ENCODE measurements at regions of chr12 and their contacts with region 1.

Region 1: GRCh38 chr12:66061557-66062289 is 68.8 kb downstream of the LLPH start:
- DNase-seq: no peak
- H3K4me3 ChIP-seq: no peak overlapping the region
- H3K27ac ChIP-seq: no peak overlapping the region
- H3K4me1 ChIP-seq: no peaks in the 10 kb centered on the region
- H3K27me3 ChIP-seq: no peaks in the 10 kb centered on the region
- CTCF ChIP-seq: no peak

Region 2: DNA sequence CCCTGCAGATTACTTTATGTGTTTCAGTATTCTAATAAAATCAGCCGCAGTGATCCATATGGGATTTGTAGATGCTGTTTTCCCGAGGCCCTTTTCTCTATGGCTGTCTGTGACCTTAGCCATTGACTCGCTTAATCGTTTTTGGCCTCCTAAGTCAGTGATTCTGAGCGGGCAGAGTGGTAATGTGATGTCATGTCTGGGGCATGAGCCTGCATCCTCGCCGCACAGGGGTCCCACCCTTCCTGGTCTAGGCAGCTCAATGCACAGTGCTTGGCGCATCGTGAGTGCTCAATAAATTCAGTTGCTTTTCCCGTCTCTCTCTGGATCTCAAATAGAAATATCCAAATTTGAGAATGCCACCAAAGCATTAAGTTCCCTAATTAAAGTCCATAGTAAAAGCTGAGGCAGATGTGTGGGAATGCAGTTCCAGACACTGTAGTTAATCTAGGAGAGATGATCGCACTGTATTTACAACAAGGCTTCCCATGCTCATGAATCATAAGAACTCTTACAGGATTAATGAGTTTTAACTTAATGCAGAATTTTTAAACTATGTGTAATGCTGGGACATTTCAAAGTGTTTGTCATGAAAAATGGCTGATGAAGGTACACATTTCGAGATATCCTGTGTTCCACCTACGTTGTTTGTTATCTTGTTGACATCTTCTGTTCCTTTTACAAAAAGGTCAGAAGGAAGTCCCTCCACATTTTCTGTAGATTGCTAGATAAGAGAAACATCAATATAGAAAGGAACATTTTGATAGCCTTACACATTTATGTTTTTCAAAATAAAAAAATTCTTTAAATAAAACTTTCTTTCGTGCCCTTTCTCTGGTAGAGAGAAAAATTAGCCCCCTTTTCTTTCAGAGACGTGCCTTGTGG is 208.0 kb before region 1 on chr12:
- CTCF ChIA-PET with region 1: no interaction called
- POLR2A ChIA-PET with region 1: no interaction called
- intact Hi-C with region 1: no loop called
- DNase-seq: no peak
- H3K4me3 ChIP-seq: no peak overlapping the region
- H3K27ac ChIP-seq: no peak overlapping the region
- H3K4me1 ChIP-seq: no peaks in the 10 kb centered on the region
- H3K27me3 ChIP-seq: no peaks in the 10 kb centered on the region
- CTCF ChIP-seq: no peak

Region 3: GRCh38 chr12:67391656-67392055 is 1329.9 kb after region 1 on chr12:
- CTCF ChIA-PET with region 1: interaction called, 10 read pairs
- POLR2A ChIA-PET with region 1: no interaction called
- intact Hi-C with region 1: no loop called
- DNase-seq: no peak
- H3K4me3 ChIP-seq: no peak overlapping the region
- H3K27ac ChIP-seq: no peak overlapping the region
- H3K4me1 ChIP-seq: peaks cover 8% of the 10 kb centered on the region; the same call in 1 of the 2 replicates
- H3K27me3 ChIP-seq: no peaks in the 10 kb centered on the region
- CTCF ChIP-seq: no peak